ENCODE measurements at regions of chr2 and their contacts with region 1.

Region 1: DNA sequence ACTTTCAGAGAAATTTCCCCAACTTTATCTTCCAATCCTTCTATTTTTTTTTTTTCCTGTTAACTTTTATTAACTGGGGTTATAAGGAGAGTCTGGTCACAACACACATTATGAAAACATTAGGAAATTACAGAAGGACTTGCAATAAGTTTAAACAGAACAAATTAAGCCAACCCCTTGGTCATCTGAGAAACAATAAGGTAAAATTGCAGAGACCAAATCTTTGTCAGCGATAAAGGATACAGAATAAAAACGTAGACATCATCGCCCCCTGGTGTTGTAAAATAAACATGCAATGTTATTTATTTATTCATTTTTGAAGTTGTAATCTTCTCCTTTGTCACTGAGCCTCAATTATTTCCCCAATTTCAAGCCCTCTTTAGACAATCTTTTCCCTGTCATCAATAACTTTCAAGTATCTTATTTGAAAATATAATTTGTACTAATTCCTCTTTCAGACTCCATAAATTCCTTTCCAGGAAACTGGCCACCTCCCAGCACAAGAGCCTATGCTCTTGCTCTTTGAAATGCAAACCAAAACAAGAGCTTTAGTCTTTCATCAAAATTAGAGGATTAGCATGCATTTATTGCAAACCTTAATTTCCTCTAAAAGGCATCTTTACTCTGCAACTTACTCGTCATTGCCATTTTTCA is 19.5 kb downstream of the G6PC2 start:
- DNase-seq: no peak
- ATAC-seq: no peak
- H3K4me3 Mint-ChIP-seq: no peak overlapping the region
- H3K27ac Mint-ChIP-seq: no peak overlapping the region
- H3K4me1 Mint-ChIP-seq: peaks cover 6% of the 10 kb centered on the region
- H3K27me3 Mint-ChIP-seq: peaks cover 17% of the 10 kb centered on the region

Region 2: DNA sequence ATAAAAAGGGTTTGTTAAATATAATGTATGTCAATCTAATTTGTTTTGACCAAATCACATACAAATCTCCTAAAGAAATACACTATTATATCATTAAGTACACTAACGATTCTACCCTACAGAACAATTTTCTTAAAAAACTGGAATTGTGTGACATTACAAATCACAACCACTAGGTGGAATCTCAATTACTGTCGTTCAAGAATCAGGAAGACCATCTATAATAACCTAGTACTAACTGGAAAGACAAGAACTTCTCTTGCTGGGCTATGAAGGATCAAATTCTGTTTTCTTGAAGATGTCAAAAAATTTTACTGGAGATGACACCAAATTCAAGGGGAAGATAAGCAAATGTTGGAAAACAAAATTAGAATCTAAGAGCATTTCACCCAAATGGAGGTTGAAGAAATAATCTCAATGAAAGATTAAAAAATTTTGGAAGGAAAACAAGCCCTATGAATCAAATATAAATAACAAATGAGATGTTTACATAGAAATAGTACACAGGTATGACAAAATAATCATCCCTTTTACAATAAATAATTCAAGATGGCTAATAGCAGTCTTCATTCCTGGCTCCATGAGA is 784.1 kb before region 1 on chr2:
- CTCF ChIA-PET with region 1: no interaction called
- POLR2A ChIA-PET with region 1: no interaction called
- intact Hi-C with region 1: loop called (anchors 5 kb)
- DNase-seq: no peak
- ATAC-seq: peak; percentile 26
- H3K4me3 Mint-ChIP-seq: no peak overlapping the region
- H3K27ac Mint-ChIP-seq: no peak overlapping the region
- H3K4me1 Mint-ChIP-seq: peaks cover 20% of the 10 kb centered on the region
- H3K27me3 Mint-ChIP-seq: no peaks in the 10 kb centered on the region

Region 3: DNA sequence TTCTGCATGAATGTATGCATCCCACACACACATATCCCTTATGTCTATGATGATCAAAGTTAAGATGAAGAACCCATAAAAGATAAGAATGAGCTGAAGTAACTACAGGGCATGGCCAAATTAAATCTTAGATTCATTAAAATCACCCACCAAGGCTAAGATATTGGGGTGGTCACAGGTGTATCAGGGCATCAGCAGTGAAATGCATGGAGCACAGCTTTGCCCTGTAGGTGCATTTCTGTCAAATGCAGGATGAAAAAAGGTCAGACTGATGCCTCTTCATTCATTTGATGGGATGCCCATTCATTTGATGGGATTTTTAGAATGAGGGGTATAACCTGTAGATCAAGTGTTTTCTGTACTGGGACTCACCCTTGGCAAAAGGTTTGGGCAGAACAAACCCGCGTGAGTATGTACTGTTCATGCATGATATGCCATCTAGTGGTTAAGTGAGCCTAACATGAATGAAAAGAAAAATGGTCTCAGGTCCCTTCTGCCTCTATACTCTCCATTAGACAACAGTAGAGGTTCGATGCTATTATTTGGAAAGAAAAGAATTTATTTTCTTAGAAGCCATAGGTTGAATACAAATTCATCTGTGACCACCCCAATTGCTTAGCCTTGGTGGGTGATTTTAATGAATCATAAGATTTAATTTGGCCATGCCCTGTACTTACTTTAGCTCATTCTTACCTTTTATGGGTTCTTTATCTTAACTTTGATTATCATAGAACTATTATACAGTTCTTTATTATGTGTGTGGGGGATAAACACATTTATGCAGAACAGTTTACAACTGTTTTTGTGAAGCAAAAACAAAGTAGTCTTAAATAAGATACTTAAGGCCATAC is 161.4 kb before region 1 on chr2:
- CTCF ChIA-PET with region 1: no interaction called
- POLR2A ChIA-PET with region 1: no interaction called
- intact Hi-C with region 1: loop called in 1 of 2 experiments (anchors 5 kb)
- DNase-seq: peak; percentile 29
- ATAC-seq: peak; percentile 81
- H3K4me3 Mint-ChIP-seq: no peak overlapping the region
- H3K27ac Mint-ChIP-seq: no peak overlapping the region
- H3K4me1 Mint-ChIP-seq: peaks cover 38% of the 10 kb centered on the region
- H3K27me3 Mint-ChIP-seq: no peaks in the 10 kb centered on the region

Region 4: GRCh38 chr2:168798076-168798887 is 122.3 kb before region 1 on chr2:
- CTCF ChIA-PET with region 1: no interaction called
- POLR2A ChIA-PET with region 1: no interaction called
- intact Hi-C with region 1: no loop called
- DNase-seq: no peak
- ATAC-seq: no peak
- H3K4me3 Mint-ChIP-seq: no peak overlapping the region
- H3K27ac Mint-ChIP-seq: no peak overlapping the region
- H3K4me1 Mint-ChIP-seq: no peaks in the 10 kb centered on the region
- H3K27me3 Mint-ChIP-seq: no peaks in the 10 kb centered on the region

Region 5: GRCh38 chr2:168849610-168850009 is 71.0 kb before region 1 on chr2:
- CTCF ChIA-PET with region 1: no interaction called
- POLR2A ChIA-PET with region 1: no interaction called
- intact Hi-C with region 1: loop called in 1 of 2 experiments (anchors 5 kb)
- DNase-seq: peak; percentile 8
- ATAC-seq: no peak
- H3K4me3 Mint-ChIP-seq: no peak overlapping the region
- H3K27ac Mint-ChIP-seq: no peak overlapping the region
- H3K4me1 Mint-ChIP-seq: no peaks in the 10 kb centered on the region
- H3K27me3 Mint-ChIP-seq: no peaks in the 10 kb centered on the region

Region 6: DNA sequence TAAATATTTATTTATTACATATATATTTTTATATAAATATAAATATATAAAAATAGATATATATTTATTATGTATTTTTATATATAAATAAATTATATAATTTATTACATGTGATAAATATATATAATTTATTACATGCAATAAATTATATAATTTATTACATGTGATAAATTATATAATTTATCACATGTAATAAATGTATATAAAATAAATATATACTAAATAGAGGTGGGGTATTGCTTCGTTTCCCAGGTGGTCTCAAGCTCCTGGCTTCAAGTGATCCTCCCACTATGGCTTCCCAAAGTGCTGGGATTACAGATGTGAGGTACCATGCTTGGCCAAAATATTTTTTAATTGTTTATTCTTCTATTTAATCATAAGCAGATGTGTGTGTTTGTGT is 23.2 kb before region 1 on chr2:
- CTCF ChIA-PET with region 1: no interaction called
- POLR2A ChIA-PET with region 1: no interaction called
- intact Hi-C with region 1: no loop called
- DNase-seq: no peak
- ATAC-seq: no peak
- H3K4me3 Mint-ChIP-seq: no peak overlapping the region
- H3K27ac Mint-ChIP-seq: no peak overlapping the region
- H3K4me1 Mint-ChIP-seq: no peaks in the 10 kb centered on the region
- H3K27me3 Mint-ChIP-seq: no peaks in the 10 kb centered on the region

Region 7: DNA sequence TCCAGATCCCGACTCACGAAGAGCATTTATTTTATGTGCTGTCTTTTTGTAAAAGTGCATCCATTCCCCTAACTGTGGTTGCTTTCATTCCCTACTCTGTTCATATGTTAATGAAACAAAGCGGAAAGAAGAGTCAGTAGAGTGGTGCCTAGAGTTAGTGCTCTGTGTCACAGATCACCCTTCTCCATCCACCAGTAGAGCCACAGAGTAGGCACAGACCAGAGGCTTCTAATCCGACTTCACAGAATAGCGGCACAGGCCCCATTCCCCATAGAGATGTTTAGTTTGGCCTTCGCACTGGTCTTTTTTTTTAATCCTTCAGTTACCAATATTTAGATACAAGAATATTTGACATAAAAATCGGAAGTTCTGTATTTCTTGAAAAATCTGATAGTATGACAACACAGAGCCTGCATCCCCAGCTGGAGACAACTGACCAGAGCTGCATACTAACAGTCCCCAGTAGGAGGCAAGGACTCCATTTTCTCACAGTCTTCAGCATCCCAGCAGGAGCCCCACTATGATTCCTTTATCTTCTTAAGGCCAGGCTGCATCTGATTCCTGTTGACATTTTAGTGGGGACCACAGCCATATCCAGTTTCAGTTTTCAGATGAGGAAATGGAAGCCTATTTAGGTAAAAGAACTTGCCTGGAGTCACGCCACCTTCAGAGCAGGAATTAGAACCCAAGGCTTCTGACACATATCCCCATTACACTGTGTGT is 12.5 kb before region 1 on chr2:
- CTCF ChIA-PET with region 1: interaction called, 17 read pairs
- POLR2A ChIA-PET with region 1: no interaction called
- intact Hi-C with region 1: no loop called
- DNase-seq: no peak
- ATAC-seq: no peak
- H3K4me3 Mint-ChIP-seq: no peak overlapping the region
- H3K27ac Mint-ChIP-seq: no peak overlapping the region
- H3K4me1 Mint-ChIP-seq: peaks cover 4% of the 10 kb centered on the region
- H3K27me3 Mint-ChIP-seq: peaks cover 16% of the 10 kb centered on the region

Region 8: GRCh38 chr2:168992591-168993349 is 72.1 kb after region 1 on chr2:
- CTCF ChIA-PET with region 1: no interaction called
- POLR2A ChIA-PET with region 1: no interaction called
- intact Hi-C with region 1: no loop called
- DNase-seq: no peak
- ATAC-seq: no peak
- H3K4me3 Mint-ChIP-seq: no peak overlapping the region
- H3K27ac Mint-ChIP-seq: no peak overlapping the region
- H3K4me1 Mint-ChIP-seq: no peaks in the 10 kb centered on the region
- H3K27me3 Mint-ChIP-seq: peaks cover 5% of the 10 kb centered on the region

Region 9: GRCh38 chr2:169026056-169026455 is 105.4 kb after region 1 on chr2:
- CTCF ChIA-PET with region 1: no interaction called
- POLR2A ChIA-PET with region 1: no interaction called
- intact Hi-C with region 1: no loop called
- DNase-seq: no peak
- ATAC-seq: no peak
- H3K4me3 Mint-ChIP-seq: no peak overlapping the region
- H3K27ac Mint-ChIP-seq: no peak overlapping the region
- H3K4me1 Mint-ChIP-seq: peaks cover 9% of the 10 kb centered on the region
- H3K27me3 Mint-ChIP-seq: no peaks in the 10 kb centered on the region